Common myeloid progenitor, CD34-positive (primary cell): ENCODE measurements at regions of chr10 and their contacts with region 1.

Region 1: GRCh38 chr10:63157845-63158624 is 24.9 kb downstream of the NRBF2 start:
- DNase-seq: peak; percentile 85 to 90 (median 89)
- H3K4me3 ChIP-seq: no peak overlapping the region
- H3K27ac ChIP-seq: no peak overlapping the region
- H3K4me1 ChIP-seq: no peaks in the 10 kb centered on the region
- H3K27me3 ChIP-seq: no peaks in the 10 kb centered on the region

Region 2: DNA sequence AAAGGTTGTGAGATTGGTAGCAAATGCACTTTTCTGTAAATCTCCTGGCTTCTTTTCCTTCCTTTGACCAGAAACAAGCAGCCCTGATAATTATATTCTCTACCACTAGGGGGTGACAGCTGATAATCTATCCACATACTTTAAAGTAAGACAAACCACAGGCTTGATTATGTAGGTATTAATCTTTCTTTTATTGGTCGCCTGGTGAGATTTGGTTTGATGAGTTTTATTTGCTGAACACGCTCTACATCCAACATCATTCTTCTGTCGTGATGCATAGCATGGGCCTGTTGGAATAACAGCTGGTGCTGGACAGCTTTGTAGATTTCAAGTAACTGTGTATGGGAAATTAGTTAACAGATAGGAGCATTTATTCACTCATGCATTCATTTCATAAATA is 720.3 kb before region 1 on chr10:
- CTCF ChIA-PET with region 1: interaction called, 20 read pairs
- POLR2A ChIA-PET with region 1: no interaction called
- DNase-seq: peak; percentile 53 to 75 (median 67)
- H3K4me3 ChIP-seq: no peak overlapping the region
- H3K27ac ChIP-seq: no peak overlapping the region
- H3K4me1 ChIP-seq: no peaks in the 10 kb centered on the region
- H3K27me3 ChIP-seq: peaks cover 0 to 7% (median 0%) of the 10 kb centered on the region in 5 experiments

Region 3: GRCh38 chr10:62594093-62594520 is 563.9 kb before region 1 on chr10:
- CTCF ChIA-PET with region 1: interaction called, 17 read pairs
- POLR2A ChIA-PET with region 1: no interaction called
- DNase-seq: peak; percentile 36 to 51 (median 42)
- H3K4me3 ChIP-seq: no peak overlapping the region
- H3K27ac ChIP-seq: no peak overlapping the region
- H3K4me1 ChIP-seq: no peaks in the 10 kb centered on the region
- H3K27me3 ChIP-seq: peaks cover 0 to 8% (median 0%) of the 10 kb centered on the region in 5 experiments

Region 4: GRCh38 chr10:62610649-62611229 is 547.3 kb before region 1 on chr10:
- CTCF ChIA-PET with region 1: interaction called, 54 read pairs
- POLR2A ChIA-PET with region 1: no interaction called
- DNase-seq: peak; percentile 69 to 83 (median 80)
- H3K4me3 ChIP-seq: no peak overlapping the region
- H3K27ac ChIP-seq: no peak overlapping the region
- H3K4me1 ChIP-seq: no peaks in the 10 kb centered on the region
- H3K27me3 ChIP-seq: peaks cover 0 to 6% (median 0%) of the 10 kb centered on the region in 5 experiments

Region 5: GRCh38 chr10:62625484-62625883 is 532.6 kb before region 1 on chr10:
- CTCF ChIA-PET with region 1: no interaction called
- POLR2A ChIA-PET with region 1: no interaction called
- DNase-seq: no peak
- H3K4me3 ChIP-seq: no peak overlapping the region
- H3K27ac ChIP-seq: no peak overlapping the region
- H3K4me1 ChIP-seq: peaks cover 0 to 7% (median under 1%) of the 10 kb centered on the region in 4 experiments
- H3K27me3 ChIP-seq: peaks cover 0 to 2% (median 0%) of the 10 kb centered on the region in 5 experiments

Region 6: GRCh38 chr10:63133056-63133820 is 24.8 kb before region 1 on chr10 and contains the start of gene NRBF2:
- CTCF ChIA-PET with region 1: interaction called, 28 read pairs
- POLR2A ChIA-PET with region 1: no interaction called
- DNase-seq: peak; percentile 98 to 99 (median 99)
- H3K4me3 ChIP-seq: peak within 1 kb of the TSS; percentile 67 to 94 (median 89)
- H3K27ac ChIP-seq: peak within 1 kb of the TSS; percentile 87 to 95
- H3K4me1 ChIP-seq: peaks cover 5 to 17% (median 10%) of the 10 kb centered on the region in 4 experiments
- H3K27me3 ChIP-seq: peaks cover 0 to 4% (median 0%) of the 10 kb centered on the region in 5 experiments

Region 7: DNA sequence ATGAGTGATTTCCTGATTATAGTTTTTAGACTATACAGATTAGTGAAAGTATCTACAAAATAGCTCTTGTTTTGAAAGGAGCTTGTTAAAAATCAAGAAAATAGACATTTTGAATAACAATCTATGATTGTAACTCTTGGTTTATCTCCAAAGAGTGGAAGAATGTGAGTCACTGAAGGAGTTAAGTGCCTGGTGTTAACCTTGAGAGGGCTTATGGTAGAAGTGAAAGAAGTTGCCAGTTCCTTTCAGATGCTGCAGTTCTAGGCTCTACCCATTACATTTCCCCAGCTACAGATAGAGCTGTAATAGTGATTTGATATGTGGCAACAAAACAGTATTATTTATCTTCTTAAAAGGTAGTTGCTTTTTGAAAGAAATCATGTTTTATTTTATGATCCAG is 12.3 kb before region 1 on chr10:
- CTCF ChIA-PET with region 1: interaction called, 17 read pairs
- POLR2A ChIA-PET with region 1: no interaction called
- DNase-seq: no peak
- H3K4me3 ChIP-seq: no peak overlapping the region
- H3K27ac ChIP-seq: no peak overlapping the region
- H3K4me1 ChIP-seq: no peaks in the 10 kb centered on the region
- H3K27me3 ChIP-seq: no peaks in the 10 kb centered on the region

Region 8: DNA sequence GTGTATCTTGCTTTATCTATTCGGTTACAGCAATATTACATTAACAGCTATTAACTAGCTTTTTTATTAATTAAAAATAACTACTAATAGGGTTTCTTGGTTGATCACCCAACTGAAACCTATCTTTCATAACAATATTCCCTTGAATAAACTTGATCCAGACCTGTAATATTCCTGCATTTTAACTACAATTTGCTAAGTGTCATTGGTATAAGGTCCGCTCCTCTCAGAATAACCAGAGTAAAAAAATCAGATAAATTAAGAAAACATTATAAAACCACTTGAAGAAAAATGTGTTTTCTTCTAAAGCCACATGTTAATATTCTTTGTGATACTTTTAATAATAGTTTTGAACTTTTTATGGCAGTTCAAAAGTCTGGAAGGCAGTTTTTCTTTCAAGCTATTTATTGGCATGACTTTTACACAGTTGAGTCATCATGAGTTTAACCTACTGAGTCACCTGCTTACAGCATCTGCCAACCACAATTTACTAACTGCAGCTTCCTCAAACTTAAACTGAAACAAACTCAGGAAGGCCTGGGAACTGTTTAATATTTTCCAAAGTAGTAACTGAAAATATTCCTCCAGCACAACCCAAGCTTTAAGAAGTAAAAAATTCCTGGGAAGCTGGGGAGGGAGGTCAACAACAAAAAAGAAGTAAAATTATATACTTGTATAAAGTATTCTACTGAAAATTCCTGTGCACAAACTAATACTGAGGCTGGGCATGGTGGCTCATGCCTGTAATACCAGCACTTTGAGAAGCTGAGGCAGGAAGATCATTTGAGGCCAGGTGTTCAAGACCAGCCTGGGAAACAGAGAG is 78.3 kb after region 1 on chr10:
- CTCF ChIA-PET with region 1: no interaction called
- POLR2A ChIA-PET with region 1: no interaction called
- DNase-seq: peak; percentile 83 to 95 (median 89)
- H3K4me3 ChIP-seq: peak overlapping the region in 4 of 7 experiments; percentile 3 to 42 (median 34)
- H3K27ac ChIP-seq: peak overlapping the region; percentile 72 to 88
- H3K4me1 ChIP-seq: peaks cover 21 to 65% (median 43%) of the 10 kb centered on the region in 4 experiments
- H3K27me3 ChIP-seq: no peaks in the 10 kb centered on the region

Region 9: GRCh38 chr10:63720072-63720537 is 562.1 kb after region 1 on chr10:
- CTCF ChIA-PET with region 1: interaction called, 232 read pairs
- POLR2A ChIA-PET with region 1: no interaction called
- DNase-seq: peak; percentile 56 to 73 (median 69)
- H3K4me3 ChIP-seq: no peak overlapping the region
- H3K27ac ChIP-seq: no peak overlapping the region
- H3K4me1 ChIP-seq: peaks cover 0 to 6% (median 0%) of the 10 kb centered on the region in 4 experiments
- H3K27me3 ChIP-seq: peaks cover 0 to 4% (median 0%) of the 10 kb centered on the region in 5 experiments